Esophagus muscularis mucosa (tissue), 4 donors: ENCODE measurements at regions of chr1 and their contacts with region 1.

Region 1: DNA sequence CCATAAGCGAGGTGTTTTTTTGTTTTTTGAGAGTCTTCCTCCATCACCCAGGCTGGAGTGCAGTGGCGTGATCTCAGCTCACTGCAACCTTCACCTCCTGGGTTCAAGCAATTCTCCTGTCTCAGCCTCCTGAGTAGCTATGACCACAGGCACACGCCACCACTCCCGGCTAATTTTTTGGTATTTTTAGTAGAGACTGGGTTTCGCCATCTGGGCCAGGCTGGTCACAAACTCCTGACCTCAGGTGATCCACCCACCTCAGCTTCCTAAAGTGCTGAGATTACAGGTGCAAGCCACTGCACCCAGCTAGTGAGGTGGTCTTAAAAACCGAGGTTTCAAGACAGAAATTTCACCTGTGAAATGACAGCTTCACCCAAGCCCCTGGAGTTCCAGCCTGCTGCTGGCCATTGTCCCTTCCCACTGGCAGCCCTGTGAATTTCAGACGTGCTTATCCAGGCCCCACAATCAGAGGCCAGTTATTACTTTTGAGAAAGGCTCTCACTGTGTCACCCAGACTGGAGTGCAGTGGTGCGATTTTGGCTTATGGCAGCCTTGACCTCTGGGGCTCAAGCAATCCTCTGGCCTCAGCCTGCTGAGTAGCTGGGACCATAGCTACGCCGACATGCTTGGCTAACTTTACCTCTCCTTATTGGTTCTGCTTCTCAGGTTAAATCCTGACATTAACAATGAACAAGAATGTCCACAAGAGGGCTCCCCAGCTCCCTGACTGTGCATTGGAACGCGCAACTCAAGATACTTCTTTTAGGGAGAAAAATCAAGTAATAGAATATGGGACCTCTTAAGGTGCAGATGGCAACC is 19.4 kb downstream of the ENO1 start:
- DNase-seq: no peak
- H3K4me3 ChIP-seq: no peak overlapping the region
- H3K27ac ChIP-seq: peak overlapping the region; percentile 36 to 67 (median 44)
- H3K4me1 ChIP-seq: peaks cover 21 to 28% (median 22%) of the 10 kb centered on the region in 4 donors
- H3K27me3 ChIP-seq: no peaks in the 10 kb centered on the region
- CTCF ChIP-seq: peak; percentile 61 to 74 (median 72)
- EP300 ChIP-seq: no peak
- POLR2A ChIP-seq: no peak

Region 2: GRCh38 chr1:7961216-7962015 is 897.7 kb before region 1 on chr1 and contains the start of gene PARK7:
- intact Hi-C with region 1: loop called (anchors 10 kb)
- DNase-seq: peak; percentile 100
- H3K4me3 ChIP-seq: peak within 1 kb of the TSS; percentile 72 to 96 (median 94)
- H3K27ac ChIP-seq: peak within 1 kb of the TSS; percentile 92 to 97 (median 95)
- H3K4me1 ChIP-seq: peaks cover 28 to 56% (median 48%) of the 10 kb centered on the region in 4 donors
- H3K27me3 ChIP-seq: no peaks in the 10 kb centered on the region
- CTCF ChIP-seq: peak; percentile 38 to 61 (median 54)
- EP300 ChIP-seq: no peak
- POLR2A ChIP-seq: peak; percentile 72
- total RNA-seq, gene PARK7: 201 to 229 (median 212) TPM

Region 3: DNA sequence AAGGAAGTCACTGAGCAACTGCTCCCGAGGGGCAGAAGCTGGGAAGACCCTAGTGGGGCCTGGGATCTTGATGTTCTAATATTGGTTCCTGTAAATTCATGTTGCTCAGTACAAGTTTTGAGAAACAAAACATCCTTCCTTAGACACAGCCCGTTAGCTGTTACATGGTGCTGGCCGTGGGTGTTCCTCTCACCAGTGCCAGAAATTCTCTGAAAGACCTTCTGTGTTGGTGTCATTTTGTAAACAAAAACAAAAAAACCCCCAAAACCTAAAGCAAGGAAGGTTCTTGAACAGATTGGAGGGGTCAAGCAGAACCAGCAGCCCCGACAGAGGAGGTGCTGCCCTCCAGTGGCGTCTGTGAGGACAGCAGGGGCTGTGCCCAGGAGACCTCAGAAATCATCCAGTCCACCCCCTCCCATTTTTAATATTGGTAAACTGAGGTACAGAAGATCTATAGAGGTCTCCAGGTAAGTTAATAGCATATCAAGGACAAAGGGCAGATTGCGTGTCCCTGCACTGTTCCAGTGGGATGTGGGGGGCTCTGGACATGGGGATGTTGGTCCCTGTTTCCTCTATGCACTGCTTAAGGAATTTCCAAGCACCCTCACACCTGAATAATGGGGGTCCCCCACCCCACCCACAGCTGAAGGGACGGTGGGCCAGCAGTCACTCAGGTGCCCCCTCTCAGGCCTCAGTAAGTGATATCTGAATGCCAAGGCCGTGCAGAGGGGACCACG is 129.0 kb after region 1 on chr1:
- intact Hi-C with region 1: loop called (anchors 5 kb)
- DNase-seq: no peak
- H3K4me3 ChIP-seq: no peak overlapping the region
- H3K27ac ChIP-seq: peak overlapping the region; percentile 40 to 76 (median 54)
- H3K4me1 ChIP-seq: peaks cover 13 to 31% (median 26%) of the 10 kb centered on the region in 4 donors
- H3K27me3 ChIP-seq: no peaks in the 10 kb centered on the region
- CTCF ChIP-seq: peak; percentile 91 to 97 (median 94)
- EP300 ChIP-seq: no peak
- POLR2A ChIP-seq: no peak